ENCODE measurements at regions of chr9 and their contacts with region 1.

Region 1: GRCh38 chr9:37309136-37309535 is 113.4 kb upstream of the GRHPR start:
- DNase-seq: peak; percentile 26
- CTCF ChIP-seq: peak; percentile 41

Region 2: GRCh38 chr9:37141015-37141414 is 168.1 kb before region 1 on chr9:
- CTCF ChIA-PET with region 1: no interaction called
- POLR2A ChIA-PET with region 1: no interaction called
- DNase-seq: no peak
- CTCF ChIP-seq: no peak

Region 3: DNA sequence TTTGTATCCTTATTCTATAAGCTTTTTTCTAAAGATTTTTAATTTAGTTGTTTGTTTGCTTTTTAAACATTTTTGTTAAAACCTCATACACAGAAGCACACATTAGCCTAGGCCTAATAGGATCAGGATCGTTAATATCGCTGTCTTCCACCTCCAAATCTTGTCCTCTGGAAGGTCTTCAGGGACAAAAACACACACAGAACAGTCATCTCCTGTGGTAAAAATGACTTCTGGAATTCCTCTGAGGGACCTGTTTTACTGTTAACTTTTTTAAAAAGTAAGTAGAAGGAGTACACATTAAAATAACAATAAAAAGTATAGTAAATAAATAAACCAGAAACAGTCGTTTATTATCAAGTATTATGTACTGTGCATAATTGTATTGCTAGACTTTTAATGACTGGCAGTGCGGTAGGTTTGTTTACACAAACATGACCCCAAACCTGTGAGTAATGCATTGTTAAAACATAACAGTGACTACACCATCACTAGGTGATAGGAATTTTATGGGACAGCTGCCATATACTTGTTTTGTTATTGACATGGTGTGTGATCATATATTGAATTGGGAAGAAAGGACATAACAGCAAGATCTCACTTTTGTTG is 79.2 kb before region 1 on chr9:
- CTCF ChIA-PET with region 1: no interaction called
- POLR2A ChIA-PET with region 1: no interaction called
- DNase-seq: no peak
- CTCF ChIP-seq: no peak

Region 4: DNA sequence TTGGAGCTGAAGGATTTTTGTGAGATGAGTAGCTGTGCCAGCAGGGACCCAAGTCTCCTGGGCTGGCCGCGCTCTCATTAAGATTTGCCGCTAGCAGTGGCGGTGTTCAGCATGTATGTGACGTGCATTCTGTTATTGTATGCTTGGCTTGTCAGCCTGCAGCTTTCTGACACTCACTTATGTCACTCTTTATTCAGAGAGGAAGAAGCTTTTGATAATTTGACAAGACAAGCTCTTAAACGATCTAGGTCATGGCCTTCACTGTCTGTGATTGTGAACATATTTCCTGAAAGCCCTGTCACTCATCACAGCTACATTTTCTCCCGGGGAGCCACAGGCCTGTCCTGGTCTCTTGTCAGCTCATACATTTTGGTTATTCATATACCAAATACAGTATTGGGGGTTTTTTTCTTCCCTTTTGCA is 15.1 kb after region 1 on chr9:
- CTCF ChIA-PET with region 1: interaction called, 15 read pairs
- POLR2A ChIA-PET with region 1: no interaction called
- DNase-seq: peak; percentile 29
- CTCF ChIP-seq: no peak

Region 5: GRCh38 chr9:37371565-37372464 is 62.7 kb after region 1 on chr9:
- CTCF ChIA-PET with region 1: no interaction called
- POLR2A ChIA-PET with region 1: no interaction called
- DNase-seq: no peak
- CTCF ChIP-seq: no peak

Region 6: DNA sequence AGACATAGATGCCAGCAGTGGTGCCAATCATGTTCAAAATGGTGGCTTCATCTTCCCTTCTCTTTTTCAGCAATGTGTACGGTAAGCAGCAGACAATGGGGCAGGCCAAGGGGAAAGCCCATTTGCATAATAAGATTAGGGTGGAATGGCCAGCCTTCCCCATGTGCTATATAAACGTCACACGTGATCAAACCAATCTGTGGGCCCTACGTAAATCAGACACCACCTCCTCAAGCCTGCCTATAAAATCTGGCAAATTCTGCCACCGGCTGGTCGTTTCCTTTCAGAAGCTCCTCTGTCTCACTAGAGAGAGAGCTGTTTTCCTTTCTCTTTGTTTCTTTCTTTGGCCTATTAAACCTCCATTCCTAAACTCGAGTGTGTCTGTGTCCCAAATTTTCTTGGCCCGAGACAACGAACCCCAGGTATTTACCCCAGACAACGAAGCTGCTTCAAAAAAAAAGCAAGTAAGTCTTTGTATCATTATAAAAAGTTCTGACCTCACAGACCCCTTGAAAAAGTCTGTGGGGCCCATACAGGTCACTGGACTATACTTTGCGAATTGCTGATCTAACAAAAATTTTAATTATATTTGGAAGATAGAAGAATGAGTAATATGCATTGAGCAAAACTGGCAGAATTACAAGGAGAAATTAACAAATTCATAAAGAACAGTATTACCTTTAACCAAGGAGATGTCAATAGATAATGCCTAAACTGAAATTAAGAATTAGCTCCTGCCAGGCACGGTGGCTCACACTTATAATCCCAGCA is 140.9 kb after region 1 on chr9:
- CTCF ChIA-PET with region 1: no interaction called
- POLR2A ChIA-PET with region 1: no interaction called
- DNase-seq: no peak
- CTCF ChIP-seq: no peak